ENCODE measurements at regions of chr20 and their contacts with region 1.

Region 1: DNA sequence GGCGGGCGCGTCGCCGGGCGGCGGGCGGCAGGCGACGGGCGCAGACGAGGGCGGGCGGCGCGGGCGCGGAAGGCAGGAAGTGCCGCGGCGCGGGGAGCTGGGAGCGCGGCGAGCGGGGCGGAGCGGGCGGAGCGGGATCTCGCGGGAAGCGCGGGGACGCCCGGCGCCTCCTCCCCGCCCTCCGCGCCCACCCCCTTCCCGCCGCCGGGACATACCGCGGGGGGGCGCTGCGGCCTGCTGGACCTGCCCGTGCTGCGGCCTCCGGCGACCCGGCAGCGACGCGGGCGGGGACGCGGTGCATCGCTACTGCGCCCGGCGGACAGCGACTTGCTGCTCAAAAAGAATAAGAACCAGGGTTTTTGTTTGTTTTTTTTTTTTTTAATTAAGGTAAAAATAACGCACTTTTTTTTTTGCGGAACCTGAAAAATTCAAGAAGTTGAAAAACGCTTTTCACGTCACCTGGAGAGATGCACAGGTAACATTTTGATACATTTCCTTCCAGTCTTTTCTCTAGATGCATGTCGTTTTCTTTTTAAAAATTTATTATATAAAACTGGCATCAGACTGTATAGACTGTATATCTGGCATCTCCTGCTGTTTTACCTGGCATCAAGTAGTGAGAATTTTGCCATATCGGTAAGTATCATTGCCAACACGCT is at the start of gene CENPB:
- DNase-seq: peak; percentile 91
- H3K4me3 Mint-ChIP-seq: peak within 1 kb of the TSS; percentile 81
- H3K27ac Mint-ChIP-seq: peak within 1 kb of the TSS; percentile 84
- H3K4me1 Mint-ChIP-seq: peaks cover 52% of the 10 kb centered on the region
- H3K27me3 Mint-ChIP-seq: peaks cover 14% of the 10 kb centered on the region

Region 2: DNA sequence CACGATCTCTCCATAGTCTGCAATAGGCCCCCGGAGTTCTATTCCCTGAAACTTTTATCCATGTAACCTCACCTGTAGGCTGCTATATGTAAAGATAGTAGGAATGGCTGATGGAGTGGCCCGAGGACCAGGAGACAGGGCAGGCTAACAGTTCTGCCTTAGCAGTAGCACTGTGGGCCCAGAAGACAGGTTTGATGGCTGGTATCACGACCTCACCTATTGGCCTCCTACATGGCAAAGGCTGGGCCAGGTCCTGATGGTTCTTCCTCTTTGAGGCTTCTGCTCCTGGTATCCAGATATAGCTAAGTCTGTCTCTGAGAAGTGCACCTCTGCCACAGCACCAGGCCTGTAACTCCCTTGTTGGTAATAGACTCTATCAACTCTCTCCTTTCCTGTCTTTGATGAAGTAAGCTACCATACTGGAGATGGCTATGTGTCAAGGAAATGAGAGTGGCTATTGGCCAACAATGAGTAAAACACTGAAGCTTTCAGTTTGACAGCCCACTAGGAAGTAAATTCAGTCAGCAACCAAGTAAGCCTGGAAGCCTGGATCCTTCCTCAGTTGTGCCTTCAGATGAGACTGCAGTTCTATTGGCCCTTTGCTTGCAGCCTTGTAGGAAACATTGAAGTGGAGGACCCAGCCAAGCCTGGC is 11.2 kb before region 1 on chr20:
- CTCF ChIA-PET with region 1: no interaction called
- DNase-seq: no peak
- H3K4me3 Mint-ChIP-seq: no peak overlapping the region
- H3K27ac Mint-ChIP-seq: no peak overlapping the region
- H3K4me1 Mint-ChIP-seq: peaks cover 22% of the 10 kb centered on the region
- H3K27me3 Mint-ChIP-seq: peaks cover 70% of the 10 kb centered on the region

Region 3: DNA sequence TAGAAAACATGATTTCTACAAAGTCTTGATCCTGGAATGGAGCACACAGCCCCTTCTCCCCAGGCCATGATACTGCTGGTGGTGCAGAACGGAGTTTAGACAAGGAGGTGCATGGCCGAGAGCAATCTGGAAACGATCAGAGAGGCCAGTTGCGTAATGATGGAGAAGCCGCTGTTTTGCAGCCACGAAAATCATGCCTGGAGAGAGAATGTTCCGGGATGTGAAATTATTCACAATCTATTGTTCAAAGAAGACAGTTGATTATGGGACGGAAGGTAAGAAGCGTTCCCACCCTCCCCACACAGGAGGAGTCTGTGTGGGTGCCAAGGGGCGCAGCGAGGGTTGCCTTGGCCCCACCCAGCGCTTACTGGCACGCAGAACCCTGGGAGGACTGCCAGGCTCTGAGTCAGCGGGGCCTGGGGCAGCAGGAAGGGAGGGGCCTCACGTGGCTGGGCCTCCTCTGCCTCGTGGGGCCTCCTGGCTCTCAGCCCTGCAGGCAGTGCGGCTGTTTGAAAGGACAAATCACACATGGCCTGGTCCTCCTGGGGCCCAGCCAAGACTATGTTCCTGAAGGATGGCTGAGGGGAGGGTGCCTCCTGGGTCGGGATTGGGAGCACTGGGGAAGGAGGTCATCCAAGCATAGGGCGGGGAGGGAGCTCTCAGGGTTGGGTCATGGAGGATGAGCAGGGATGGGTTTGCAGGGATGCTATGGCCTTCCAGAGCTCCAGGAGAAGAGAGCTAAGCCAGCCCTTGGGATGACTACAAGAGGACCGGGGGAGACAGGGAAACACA is 24.9 kb after region 1 on chr20:
- CTCF ChIA-PET with region 1: interaction called, 18 read pairs
- DNase-seq: peak; percentile 93
- H3K4me3 Mint-ChIP-seq: peak overlapping the region; percentile 75
- H3K27ac Mint-ChIP-seq: peak overlapping the region; percentile 98
- H3K4me1 Mint-ChIP-seq: peaks cover 86% of the 10 kb centered on the region
- H3K27me3 Mint-ChIP-seq: no peaks in the 10 kb centered on the region

Region 4: GRCh38 chr20:3854462-3854871 is 67.7 kb after region 1 on chr20:
- CTCF ChIA-PET with region 1: interaction called, 49 read pairs
- DNase-seq: no peak
- H3K4me3 Mint-ChIP-seq: no peak overlapping the region
- H3K27ac Mint-ChIP-seq: no peak overlapping the region
- H3K4me1 Mint-ChIP-seq: peaks cover 8% of the 10 kb centered on the region
- H3K27me3 Mint-ChIP-seq: no peaks in the 10 kb centered on the region

Measured in activated naive CD4-positive, alpha-beta T cell treated with anti-CD3 and anti-CD28 coated beads, Interleukin-2, amount 10 ng/mL, durations not matched to agents 7 days and 5 days (primary cell).